ENCODE measurements at regions of chr3 and their contacts with region 1.

Region 1: GRCh38 chr3:110753516-110753915 is 318.1 kb upstream of the NECTIN3 start:
- DNase-seq: no peak
- H3K4me3 ChIP-seq: no peak overlapping the region
- H3K27ac ChIP-seq: no peak overlapping the region
- H3K4me1 ChIP-seq: no peaks in the 10 kb centered on the region
- H3K27me3 ChIP-seq: no peaks in the 10 kb centered on the region
- CTCF ChIP-seq: no peak

Region 2: DNA sequence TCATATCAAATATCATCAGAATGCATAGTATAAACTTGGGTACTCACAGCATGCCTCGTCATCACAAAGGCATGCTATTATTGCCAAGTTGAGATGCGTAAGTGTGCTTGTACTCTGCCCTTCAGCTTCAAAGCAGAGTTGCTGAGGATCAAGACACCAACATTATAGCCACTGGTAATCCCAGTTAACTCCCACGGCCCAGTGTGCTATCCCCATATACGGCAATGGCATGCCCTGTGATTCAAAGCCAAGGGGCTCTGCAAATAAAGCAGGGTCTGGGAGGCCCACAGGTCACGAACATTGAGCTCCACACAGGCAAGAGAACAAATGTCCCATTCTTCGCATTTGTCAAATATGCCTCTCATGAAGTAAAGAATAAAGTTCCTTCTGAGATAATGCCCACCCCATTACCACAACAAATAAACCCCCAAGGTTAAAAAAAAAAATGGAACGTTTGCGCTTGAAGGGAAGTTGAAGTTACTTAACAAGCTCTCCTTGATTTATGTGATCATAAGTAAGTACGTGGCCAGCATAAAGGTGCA is 20.0 kb after region 1 on chr3:
- CTCF ChIA-PET with region 1: no interaction called
- POLR2A ChIA-PET with region 1: interaction called, 19 read pairs
- intact Hi-C with region 1: no loop called
- DNase-seq: no peak
- H3K4me3 ChIP-seq: no peak overlapping the region
- H3K27ac ChIP-seq: no peak overlapping the region
- H3K4me1 ChIP-seq: no peaks in the 10 kb centered on the region
- H3K27me3 ChIP-seq: no peaks in the 10 kb centered on the region
- CTCF ChIP-seq: no peak

Region 3: GRCh38 chr3:110783541-110783940 is 30.0 kb after region 1 on chr3:
- CTCF ChIA-PET with region 1: no interaction called
- POLR2A ChIA-PET with region 1: no interaction called
- intact Hi-C with region 1: no loop called
- DNase-seq: no peak
- H3K4me3 ChIP-seq: no peak overlapping the region
- H3K27ac ChIP-seq: no peak overlapping the region
- H3K4me1 ChIP-seq: no peaks in the 10 kb centered on the region
- H3K27me3 ChIP-seq: no peaks in the 10 kb centered on the region
- CTCF ChIP-seq: no peak